GM12878 (cell line): ENCODE measurements at regions of chrX and their contacts with region 1.

Region 1: DNA sequence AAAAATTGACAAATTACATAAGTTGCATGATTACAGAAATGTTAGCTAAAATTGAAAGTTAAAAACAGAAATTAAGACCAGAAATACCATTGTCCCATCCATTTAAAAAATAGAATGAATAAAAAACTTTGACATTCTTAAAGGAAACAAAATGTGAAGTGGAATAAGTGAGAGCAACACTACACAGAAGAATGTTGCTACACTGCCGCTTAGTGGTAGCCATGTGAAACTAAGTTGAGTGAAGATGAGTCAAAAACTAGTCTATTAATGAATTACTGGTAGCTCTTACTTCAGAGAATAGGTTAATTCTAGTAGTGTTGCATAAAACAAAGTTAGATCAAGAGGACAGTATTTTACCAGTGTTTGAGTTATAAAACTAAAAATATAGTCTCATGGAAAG is 571.0 kb upstream of the KLHL4 start:
- DNase-seq: peak; percentile 1
- ATAC-seq: peak; percentile 82
- H3K4me3 ChIP-seq: no peak overlapping the region
- H3K27ac ChIP-seq: no peak overlapping the region
- H3K4me1 ChIP-seq: no peaks in the 10 kb centered on the region
- H3K27me3 ChIP-seq: no peaks in the 10 kb centered on the region
- CTCF ChIP-seq: peak; percentile 63 to 67 (median 63)
- EP300 ChIP-seq: no peak
- POLR2A ChIP-seq: no peak
- RAD21 ChIP-seq: peak; percentile 61

Region 2: DNA sequence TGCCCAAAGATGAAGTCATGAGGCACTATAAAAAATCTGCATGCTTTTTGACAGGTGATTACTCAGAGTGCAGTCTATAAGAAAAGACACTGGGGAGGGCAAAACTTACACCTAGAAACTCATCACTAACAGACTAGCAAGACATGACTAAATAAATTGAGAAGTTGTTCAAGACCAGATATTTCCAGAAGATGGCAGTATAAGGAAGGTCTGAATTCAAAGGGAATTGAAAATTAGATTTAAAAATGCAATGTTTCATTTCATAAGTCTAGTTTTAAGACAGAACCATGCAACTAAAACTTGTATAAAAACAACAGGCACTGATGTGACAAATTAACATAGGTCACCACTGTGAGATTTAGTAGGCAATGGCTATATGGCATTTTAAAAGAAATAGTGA is 1334.6 kb before region 1 on chrX:
- CTCF ChIA-PET with region 1: no interaction called
- POLR2A ChIA-PET with region 1: no interaction called
- RAD21 ChIA-PET with region 1: no interaction called
- SMC1A ChIA-PET with region 1: no interaction called
- in situ Hi-C with region 1: no loop called
- intact Hi-C with region 1: loop called (anchors 10 kb)
- DNase-seq: no peak
- ATAC-seq: peak; percentile 46; the same call in 2 of the 3 replicates
- H3K4me3 ChIP-seq: no peak overlapping the region
- H3K27ac ChIP-seq: no peak overlapping the region
- H3K4me1 ChIP-seq: no peaks in the 10 kb centered on the region
- H3K27me3 ChIP-seq: no peaks in the 10 kb centered on the region
- CTCF ChIP-seq: peak; percentile 18 to 29 (median 18); a peak in 1 of 6 replicates
- EP300 ChIP-seq: no peak
- POLR2A ChIP-seq: no peak
- RAD21 ChIP-seq: peak; percentile 42

Region 3: GRCh38 chrX:86133761-86134160 is 812.8 kb before region 1 on chrX:
- CTCF ChIA-PET with region 1: interaction called, 5 read pairs
- POLR2A ChIA-PET with region 1: no interaction called
- RAD21 ChIA-PET with region 1: no interaction called
- SMC1A ChIA-PET with region 1: interaction called, 5 read pairs
- in situ Hi-C with region 1: no loop called
- intact Hi-C with region 1: loop called (anchors 10 kb)
- DNase-seq: no peak
- ATAC-seq: peak; percentile 57
- H3K4me3 ChIP-seq: no peak overlapping the region
- H3K27ac ChIP-seq: no peak overlapping the region
- H3K4me1 ChIP-seq: no peaks in the 10 kb centered on the region
- H3K27me3 ChIP-seq: no peaks in the 10 kb centered on the region
- CTCF ChIP-seq: peak; percentile 40 to 47 (median 45); a peak in 4 of 6 replicates
- EP300 ChIP-seq: no peak
- POLR2A ChIP-seq: no peak
- RAD21 ChIP-seq: peak; percentile 39; the same call in 1 of the 2 replicates

Region 4: DNA sequence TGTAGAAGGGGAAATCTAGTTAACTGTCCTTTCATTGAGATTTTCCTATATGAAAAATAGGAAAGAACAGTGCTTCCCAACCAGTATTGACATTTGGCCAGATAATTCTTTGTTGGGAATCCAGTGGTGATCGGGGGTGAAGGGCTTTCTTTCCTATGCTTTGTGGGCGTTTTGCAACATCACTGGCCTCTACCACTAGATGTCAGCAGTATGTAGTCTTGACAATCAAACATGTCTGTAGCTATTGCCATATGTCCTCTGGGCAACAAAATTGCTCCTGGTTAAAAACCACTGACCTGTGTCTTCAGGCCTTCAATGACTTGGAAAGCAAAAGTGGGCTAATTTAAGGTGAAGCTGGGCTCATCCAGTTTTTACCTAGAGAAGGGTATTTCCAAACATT is 139.8 kb before region 1 on chrX:
- CTCF ChIA-PET with region 1: interaction called, 43 read pairs
- POLR2A ChIA-PET with region 1: no interaction called
- RAD21 ChIA-PET with region 1: interaction called, 20 read pairs
- SMC1A ChIA-PET with region 1: interaction called, 27 read pairs
- in situ Hi-C with region 1: no loop called
- intact Hi-C with region 1: loop called (anchors 2 kb)
- DNase-seq: no peak
- ATAC-seq: peak; percentile 68
- H3K4me3 ChIP-seq: no peak overlapping the region
- H3K27ac ChIP-seq: no peak overlapping the region
- H3K4me1 ChIP-seq: no peaks in the 10 kb centered on the region
- H3K27me3 ChIP-seq: no peaks in the 10 kb centered on the region
- CTCF ChIP-seq: peak; percentile 47 to 53 (median 49); a peak in 5 of 6 replicates
- EP300 ChIP-seq: no peak
- POLR2A ChIP-seq: no peak
- RAD21 ChIP-seq: peak; percentile 41

Region 5: DNA sequence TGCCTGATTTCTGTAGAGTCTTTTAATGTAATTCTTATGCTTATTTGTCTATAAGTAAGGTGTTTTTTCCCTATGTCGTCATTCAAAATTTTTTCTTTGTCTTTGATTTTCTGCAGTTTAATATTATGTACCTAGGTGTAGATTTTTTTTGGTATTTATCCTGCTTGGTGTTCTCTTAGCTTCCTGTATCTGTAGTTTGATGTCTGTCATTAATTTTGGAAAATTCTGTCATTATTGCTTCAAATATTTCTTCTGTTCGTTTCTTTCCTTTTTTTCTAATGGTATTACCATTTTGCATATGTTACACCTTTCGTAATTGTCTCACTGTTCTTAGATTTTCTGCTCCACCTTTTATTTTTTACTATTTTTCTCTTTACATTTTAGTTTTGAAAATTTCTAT is 101.5 kb before region 1 on chrX:
- CTCF ChIA-PET with region 1: no interaction called
- POLR2A ChIA-PET with region 1: no interaction called
- RAD21 ChIA-PET with region 1: no interaction called
- SMC1A ChIA-PET with region 1: no interaction called
- in situ Hi-C with region 1: no loop called
- intact Hi-C with region 1: no loop called
- DNase-seq: no peak
- ATAC-seq: no peak
- H3K4me3 ChIP-seq: no peak overlapping the region
- H3K27ac ChIP-seq: no peak overlapping the region
- H3K4me1 ChIP-seq: no peaks in the 10 kb centered on the region
- H3K27me3 ChIP-seq: no peaks in the 10 kb centered on the region
- CTCF ChIP-seq: no peak
- EP300 ChIP-seq: no peak
- POLR2A ChIP-seq: no peak
- RAD21 ChIP-seq: no peak